OCI-LY7 (cell line): ENCODE measurements at regions of chr2 and their contacts with region 1.

Region 1: DNA sequence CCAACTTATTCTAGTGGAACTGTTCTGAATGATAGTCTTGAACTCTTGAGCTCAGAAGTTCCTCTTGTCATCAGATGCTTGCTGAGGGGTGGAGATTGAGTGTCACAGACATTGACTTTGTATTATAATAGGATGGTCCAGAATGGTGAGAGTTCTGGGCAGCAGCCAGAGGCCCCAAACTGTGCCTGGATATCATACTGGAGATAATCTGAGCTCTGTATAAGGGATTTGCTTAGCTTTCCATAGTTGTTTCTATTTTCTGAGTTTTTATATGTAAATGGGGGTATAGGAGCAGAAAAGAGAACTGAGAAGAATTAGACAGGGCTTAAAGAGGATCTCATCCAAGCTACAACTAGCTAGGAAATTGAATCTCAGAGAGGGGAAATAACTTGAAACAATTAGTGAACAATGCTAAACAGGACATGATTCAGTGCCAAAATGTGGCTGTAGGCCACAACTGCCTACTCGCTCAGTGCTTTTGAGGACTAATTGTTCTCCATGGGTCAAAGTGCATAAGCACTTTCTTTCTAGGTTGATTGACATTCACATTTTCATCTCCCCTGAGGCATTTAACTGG is 10.1 kb upstream of the LCLAT1 start:
- DNase-seq: no peak
- H3K4me3 ChIP-seq: no peak overlapping the region
- H3K27ac ChIP-seq: no peak overlapping the region
- H3K4me1 ChIP-seq: peaks cover 8% of the 10 kb centered on the region
- CTCF ChIP-seq: no peak

Region 2: GRCh38 chr2:30447149-30448045 is 10.4 kb after region 1 on chr2 and contains the start of gene LCLAT1:
- CTCF ChIA-PET with region 1: interaction called, 3 read pairs
- POLR2A ChIA-PET with region 1: interaction called, 19 read pairs
- intact Hi-C with region 1: no loop called
- DNase-seq: peak; percentile 88
- H3K4me3 ChIP-seq: peak within 1 kb of the TSS; percentile 89
- H3K27ac ChIP-seq: peak within 1 kb of the TSS; percentile 36
- H3K4me1 ChIP-seq: peaks cover 14% of the 10 kb centered on the region
- CTCF ChIP-seq: no peak
- total RNA-seq, gene LCLAT1: 9.2 and 11.5 TPM in 2 replicates

Region 3: GRCh38 chr2:30823452-30823851 is 386.5 kb after region 1 on chr2:
- CTCF ChIA-PET with region 1: no interaction called
- POLR2A ChIA-PET with region 1: no interaction called
- intact Hi-C with region 1: no loop called
- DNase-seq: no peak
- H3K4me3 ChIP-seq: no peak overlapping the region
- H3K27ac ChIP-seq: no peak overlapping the region
- H3K4me1 ChIP-seq: no peaks in the 10 kb centered on the region
- CTCF ChIP-seq: no peak